PC-9 (cell line): ENCODE measurements at regions of chr21 and their contacts with region 1.

Region 1: GRCh38 chr21:35217504-35218060 is 168.5 kb upstream of the RUNX1 start:
- DNase-seq: peak; percentile 88 to 100
- H3K4me3 ChIP-seq: no peak overlapping the region
- H3K27ac ChIP-seq: peak overlapping the region; percentile 100
- H3K4me1 ChIP-seq: peaks cover 55% of the 10 kb centered on the region
- H3K27me3 ChIP-seq: no peaks in the 10 kb centered on the region
- CTCF ChIP-seq: no peak

Region 2: GRCh38 chr21:35198031-35198431 is 19.6 kb before region 1 on chr21:
- CTCF ChIA-PET with region 1: no interaction called
- POLR2A ChIA-PET with region 1: no interaction called
- intact Hi-C with region 1: loop called (anchors 1 kb)
- DNase-seq: peak; percentile 48 to 97
- H3K4me3 ChIP-seq: peak overlapping the region; percentile 22; the same call in 1 of the 2 replicates
- H3K27ac ChIP-seq: peak overlapping the region; percentile 100
- H3K4me1 ChIP-seq: peaks cover 48% of the 10 kb centered on the region
- H3K27me3 ChIP-seq: no peaks in the 10 kb centered on the region
- CTCF ChIP-seq: no peak

Region 3: GRCh38 chr21:35273322-35273721 is 55.7 kb after region 1 on chr21:
- CTCF ChIA-PET with region 1: no interaction called
- POLR2A ChIA-PET with region 1: no interaction called
- intact Hi-C with region 1: no loop called
- DNase-seq: peak; percentile 60 to 86
- H3K4me3 ChIP-seq: no peak overlapping the region
- H3K27ac ChIP-seq: peak overlapping the region; percentile 62
- H3K4me1 ChIP-seq: peaks cover 32% of the 10 kb centered on the region
- H3K27me3 ChIP-seq: no peaks in the 10 kb centered on the region
- CTCF ChIP-seq: no peak